Activated CD4-positive, alpha-beta T cell treated with anti-CD3 and anti-CD28 coated beads for 36 hours (primary cell): ENCODE measurements at regions of chr14 and their contacts with region 1.

Region 1: GRCh38 chr14:54773171-54773975 is 129.3 kb downstream of the GCH1 start:
- DNase-seq: peak; percentile 92
- ATAC-seq: peak; percentile 81
- H3K4me3 Mint-ChIP-seq: peak overlapping the region; percentile 6
- H3K27ac Mint-ChIP-seq: peak overlapping the region; percentile 83
- H3K4me1 Mint-ChIP-seq: peaks cover 54% of the 10 kb centered on the region
- H3K27me3 Mint-ChIP-seq: peaks cover 14% of the 10 kb centered on the region

Region 2: GRCh38 chr14:54396493-54397335 is 376.7 kb before region 1 on chr14 and contains the start of gene CDKN3:
- CTCF ChIA-PET with region 1: no interaction called
- POLR2A ChIA-PET with region 1: no interaction called
- intact Hi-C with region 1: loop called in 1 of 2 experiments (anchors 1 kb)
- DNase-seq: peak; percentile 98
- ATAC-seq: peak; percentile 97
- H3K4me3 Mint-ChIP-seq: peak within 1 kb of the TSS; percentile 82
- H3K27ac Mint-ChIP-seq: peak within 1 kb of the TSS; percentile 76
- H3K4me1 Mint-ChIP-seq: peaks cover 24% of the 10 kb centered on the region
- H3K27me3 Mint-ChIP-seq: no peaks in the 10 kb centered on the region
- total RNA-seq, gene CDKN3: 86.7 to 133 TPM

Region 3: GRCh38 chr14:54509546-54510501 is 263.5 kb before region 1 on chr14 and contains the start of gene CGRRF1:
- CTCF ChIA-PET with region 1: interaction called, 7 read pairs
- POLR2A ChIA-PET with region 1: interaction called, 5 read pairs
- intact Hi-C with region 1: loop called in 1 of 2 experiments (anchors 1 kb)
- DNase-seq: peak; percentile 98
- ATAC-seq: peak; percentile 99
- H3K4me3 Mint-ChIP-seq: peak within 1 kb of the TSS; percentile 92
- H3K27ac Mint-ChIP-seq: peak within 1 kb of the TSS; percentile 80
- H3K4me1 Mint-ChIP-seq: peaks cover 34% of the 10 kb centered on the region
- H3K27me3 Mint-ChIP-seq: no peaks in the 10 kb centered on the region
- total RNA-seq, gene CGRRF1: 10.2 to 15.2 TPM

Region 4: DNA sequence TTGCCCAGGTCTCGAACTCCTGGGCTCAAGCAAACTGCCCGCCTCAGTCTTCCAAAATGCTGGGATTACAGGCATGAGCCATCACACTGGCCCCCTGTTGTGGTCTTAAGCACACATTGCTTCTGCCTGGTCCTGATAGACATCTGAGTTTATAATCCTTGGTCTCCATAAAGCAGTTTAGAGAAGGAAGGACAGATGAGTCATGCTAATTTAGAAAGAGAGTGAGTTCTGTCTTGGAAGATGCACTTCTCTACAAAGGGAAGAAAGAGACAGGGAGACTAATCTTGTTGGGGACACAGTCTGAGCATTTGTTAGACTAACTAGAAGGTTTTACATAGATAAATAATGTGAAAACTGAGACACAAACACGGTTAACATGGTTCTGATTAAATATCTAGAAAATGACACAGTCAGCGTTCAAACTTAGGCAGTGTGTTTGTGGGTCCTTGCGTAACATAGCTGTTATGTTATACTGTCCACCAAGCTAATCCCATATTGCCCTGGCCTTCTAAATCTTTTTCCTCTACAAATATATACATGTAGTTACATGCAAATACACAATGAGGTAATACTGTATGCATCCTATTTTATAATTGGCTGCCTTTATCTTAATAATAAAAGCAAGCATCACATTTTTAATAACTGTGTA is 175.5 kb before region 1 on chr14:
- CTCF ChIA-PET with region 1: no interaction called
- POLR2A ChIA-PET with region 1: no interaction called
- intact Hi-C with region 1: no loop called
- DNase-seq: no peak
- ATAC-seq: no peak
- H3K4me3 Mint-ChIP-seq: no peak overlapping the region
- H3K27ac Mint-ChIP-seq: no peak overlapping the region
- H3K4me1 Mint-ChIP-seq: peaks cover 11% of the 10 kb centered on the region
- H3K27me3 Mint-ChIP-seq: peaks cover 2% of the 10 kb centered on the region

Region 5: GRCh38 chr14:54627540-54628363 is 145.6 kb before region 1 on chr14:
- CTCF ChIA-PET with region 1: interaction called, 17 read pairs
- POLR2A ChIA-PET with region 1: no interaction called
- intact Hi-C with region 1: loop called (anchors 1 to 2 kb)
- DNase-seq: peak; percentile 50
- ATAC-seq: peak; percentile 74
- H3K4me3 Mint-ChIP-seq: peak overlapping the region; percentile 59
- H3K27ac Mint-ChIP-seq: peak overlapping the region; percentile 96
- H3K4me1 Mint-ChIP-seq: peaks cover 44% of the 10 kb centered on the region
- H3K27me3 Mint-ChIP-seq: no peaks in the 10 kb centered on the region

Region 6: DNA sequence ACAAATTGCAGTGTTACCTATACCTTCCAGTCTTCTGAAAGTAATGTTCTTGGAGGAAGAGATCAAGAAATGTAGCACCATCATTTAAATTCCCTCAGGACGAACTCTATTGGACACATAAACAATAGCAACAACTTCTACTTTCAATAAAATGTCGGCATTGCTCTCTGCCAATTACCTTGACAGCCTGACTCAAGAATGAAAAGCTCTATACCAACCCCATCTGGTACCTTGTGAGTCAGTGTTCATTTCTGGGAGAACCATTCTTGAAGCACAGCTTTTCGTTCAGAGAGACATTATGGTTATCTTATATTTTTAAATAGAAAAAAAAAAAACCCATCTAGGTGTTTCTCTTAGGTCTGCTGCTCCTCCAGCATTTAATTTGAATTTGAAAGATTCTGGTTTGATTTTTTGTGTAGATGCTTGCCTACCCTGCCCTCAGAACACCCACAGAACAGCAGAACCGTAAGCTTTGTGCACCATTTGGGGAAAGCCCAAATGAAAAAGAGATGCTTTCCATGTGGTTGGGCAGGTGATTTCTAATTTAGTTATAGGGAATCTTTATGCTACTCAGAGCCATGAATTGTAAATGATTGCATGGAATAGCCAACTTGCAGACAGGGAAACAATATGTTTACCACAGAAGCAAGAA is 50.5 kb before region 1 on chr14:
- CTCF ChIA-PET with region 1: interaction called, 49 read pairs
- POLR2A ChIA-PET with region 1: no interaction called
- intact Hi-C with region 1: no loop called
- DNase-seq: no peak
- ATAC-seq: peak; percentile 84
- H3K4me3 Mint-ChIP-seq: no peak overlapping the region
- H3K27ac Mint-ChIP-seq: no peak overlapping the region
- H3K4me1 Mint-ChIP-seq: peaks cover 6% of the 10 kb centered on the region
- H3K27me3 Mint-ChIP-seq: peaks cover 26% of the 10 kb centered on the region

Region 7: GRCh38 chr14:54805521-54806322 is 32.3 kb after region 1 on chr14:
- CTCF ChIA-PET with region 1: interaction called, 20 read pairs
- POLR2A ChIA-PET with region 1: no interaction called
- intact Hi-C with region 1: loop called (anchors 1 to 2 kb)
- DNase-seq: peak; percentile 91
- ATAC-seq: peak; percentile 87
- H3K4me3 Mint-ChIP-seq: no peak overlapping the region
- H3K27ac Mint-ChIP-seq: no peak overlapping the region
- H3K4me1 Mint-ChIP-seq: peaks cover 11% of the 10 kb centered on the region
- H3K27me3 Mint-ChIP-seq: peaks cover 18% of the 10 kb centered on the region

Region 8: GRCh38 chr14:54818201-54819133 is 45.1 kb after region 1 on chr14:
- CTCF ChIA-PET with region 1: no interaction called
- POLR2A ChIA-PET with region 1: no interaction called
- intact Hi-C with region 1: no loop called
- DNase-seq: no peak
- ATAC-seq: no peak
- H3K4me3 Mint-ChIP-seq: no peak overlapping the region
- H3K27ac Mint-ChIP-seq: no peak overlapping the region
- H3K4me1 Mint-ChIP-seq: no peaks in the 10 kb centered on the region
- H3K27me3 Mint-ChIP-seq: peaks cover 3% of the 10 kb centered on the region

Region 9: GRCh38 chr14:55026793-55027561 is 253.6 kb after region 1 on chr14 and contains the starts of genes SOCS4 and WDHD1:
- CTCF ChIA-PET with region 1: no interaction called
- POLR2A ChIA-PET with region 1: no interaction called
- intact Hi-C with region 1: no loop called
- DNase-seq: peak; percentile 98
- ATAC-seq: peak; percentile 93
- H3K4me3 Mint-ChIP-seq: peak within 1 kb of the TSS; percentile 95
- H3K27ac Mint-ChIP-seq: peak within 1 kb of the TSS; percentile 97
- H3K4me1 Mint-ChIP-seq: peaks cover 47% of the 10 kb centered on the region
- H3K27me3 Mint-ChIP-seq: no peaks in the 10 kb centered on the region
- total RNA-seq, gene SOCS4: 18.4 to 21.3 TPM
- total RNA-seq, gene WDHD1: 64.4 to 71.1 TPM

Region 10: GRCh38 chr14:55160989-55161388 is 387.6 kb after region 1 on chr14:
- CTCF ChIA-PET with region 1: no interaction called
- POLR2A ChIA-PET with region 1: no interaction called
- intact Hi-C with region 1: no loop called
- DNase-seq: no peak
- ATAC-seq: no peak
- H3K4me3 Mint-ChIP-seq: no peak overlapping the region
- H3K27ac Mint-ChIP-seq: no peak overlapping the region
- H3K4me1 Mint-ChIP-seq: peaks cover 8% of the 10 kb centered on the region
- H3K27me3 Mint-ChIP-seq: no peaks in the 10 kb centered on the region